Left cardiac atrium (tissue), 4 donors: ENCODE measurements at regions of chr14 and their contacts with region 1.

Region 1: GRCh38 chr14:69242311-69243224 is 17.4 kb upstream of the GALNT16 start:
- DNase-seq: peak; percentile 44
- ATAC-seq: peak; percentile 64 to 72

Region 2: GRCh38 chr14:69363055-69363454 is 120.5 kb after region 1 on chr14:
- intact Hi-C with region 1: loop called in 1 of 2 experiments (anchors 2 kb)
- DNase-seq: peak; percentile 53
- ATAC-seq: peak; percentile 83 to 94

Region 3: DNA sequence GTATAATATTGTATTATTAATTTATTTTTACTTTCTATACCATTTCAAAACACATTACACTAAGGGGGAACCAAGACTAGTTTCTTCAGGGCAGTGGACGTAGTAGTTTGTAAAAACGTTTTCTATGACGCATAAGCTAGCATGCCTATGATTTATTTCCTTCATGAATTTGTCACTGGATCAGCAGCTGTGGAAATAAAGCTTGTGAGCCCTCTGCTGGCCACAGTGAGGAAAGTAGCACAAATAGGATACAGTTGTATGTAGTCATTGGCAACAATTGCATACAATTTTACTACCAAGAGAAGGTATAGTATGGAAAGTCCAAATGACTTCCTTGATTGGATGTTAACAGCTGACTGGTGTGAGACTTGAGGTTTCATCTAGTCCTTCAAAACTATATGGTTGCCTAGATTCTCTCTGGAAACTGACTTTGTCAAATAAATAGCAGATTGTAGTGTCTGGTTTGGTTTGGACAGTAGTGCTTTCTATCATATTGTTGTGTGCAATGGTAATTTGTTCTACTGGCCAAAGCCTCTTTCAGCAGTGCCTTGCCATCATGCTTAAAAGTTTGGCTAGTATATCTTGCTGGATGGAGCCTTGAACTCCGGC is 217.6 kb after region 1 on chr14:
- intact Hi-C with region 1: loop called (anchors 5 to 10 kb)
- DNase-seq: peak; percentile 68
- ATAC-seq: peak; percentile 83 to 92